ENCODE measurements at regions of chr7 and their contacts with region 1.

Region 1: GRCh38 chr7:37109843-37110242 is 338.8 kb downstream of the ELMO1 start:
- DNase-seq: no peak
- ATAC-seq: peak; percentile 55
- H3K4me3 ChIP-seq: no peak overlapping the region
- H3K27ac ChIP-seq: peak overlapping the region; percentile 79; the same call in 1 of the 2 replicates
- H3K4me1 ChIP-seq: peaks cover 7% of the 10 kb centered on the region
- H3K27me3 ChIP-seq: no peaks in the 10 kb centered on the region
- CTCF ChIP-seq: no peak
- POLR2A ChIP-seq: no peak
- RAD21 ChIP-seq: no peak

Region 2: GRCh38 chr7:37031571-37032257 is 78.1 kb before region 1 on chr7:
- CTCF ChIA-PET with region 1: no interaction called
- POLR2A ChIA-PET with region 1: no interaction called
- dilution Hi-C with region 1: no loop called
- in situ Hi-C with region 1: no loop called
- intact Hi-C with region 1: loop called (anchors 2 kb)
- DNase-seq: peak; percentile 100
- ATAC-seq: peak; percentile 95
- H3K4me3 ChIP-seq: no peak overlapping the region
- H3K27ac ChIP-seq: peak overlapping the region; percentile 60
- H3K4me1 ChIP-seq: peaks cover 13% of the 10 kb centered on the region
- H3K27me3 ChIP-seq: no peaks in the 10 kb centered on the region
- CTCF ChIP-seq: no peak
- POLR2A ChIP-seq: no peak
- RAD21 ChIP-seq: no peak

Region 3: GRCh38 chr7:37054624-37055241 is 55.1 kb before region 1 on chr7:
- CTCF ChIA-PET with region 1: no interaction called
- POLR2A ChIA-PET with region 1: no interaction called
- dilution Hi-C with region 1: no loop called
- in situ Hi-C with region 1: no loop called
- intact Hi-C with region 1: loop called (anchors 2 kb)
- DNase-seq: peak; percentile 60
- ATAC-seq: peak; percentile 87
- H3K4me3 ChIP-seq: no peak overlapping the region
- H3K27ac ChIP-seq: no peak overlapping the region
- H3K4me1 ChIP-seq: peaks cover 1% of the 10 kb centered on the region; the same call in 1 of the 2 replicates
- H3K27me3 ChIP-seq: peaks cover 2% of the 10 kb centered on the region
- CTCF ChIP-seq: no peak
- POLR2A ChIP-seq: no peak
- RAD21 ChIP-seq: no peak